IMR-90 (cell line): ENCODE measurements at regions of chr9 and their contacts with region 1.

Region 1: DNA sequence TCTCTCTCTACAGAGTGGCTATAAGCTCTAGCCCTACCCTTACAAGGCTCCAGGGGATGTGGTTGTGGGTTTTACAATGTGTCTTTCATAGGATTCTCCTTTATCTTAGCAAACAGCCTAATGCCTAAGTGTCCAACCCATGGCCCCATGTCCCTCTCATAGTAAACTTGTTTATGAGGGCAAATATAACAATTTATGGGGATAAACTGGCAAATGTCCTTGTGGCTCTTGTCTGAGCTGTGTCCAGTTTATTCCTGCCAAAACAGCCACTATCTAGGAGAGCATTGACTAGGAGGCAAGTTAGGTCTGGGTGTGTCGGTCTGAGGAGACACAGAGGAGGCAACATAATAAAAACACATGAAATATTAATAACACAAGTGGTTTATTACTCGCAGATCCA is 335.1 kb downstream of the IZUMO3 start:
- DNase-seq: no peak
- ATAC-seq: no peak
- H3K4me3 ChIP-seq: no peak overlapping the region
- H3K27ac ChIP-seq: no peak overlapping the region
- H3K4me1 ChIP-seq: no peaks in the 10 kb centered on the region
- H3K27me3 ChIP-seq: no peaks in the 10 kb centered on the region
- CTCF ChIP-seq: no peak
- POLR2A ChIP-seq: no peak
- RAD21 ChIP-seq: no peak

Region 2: DNA sequence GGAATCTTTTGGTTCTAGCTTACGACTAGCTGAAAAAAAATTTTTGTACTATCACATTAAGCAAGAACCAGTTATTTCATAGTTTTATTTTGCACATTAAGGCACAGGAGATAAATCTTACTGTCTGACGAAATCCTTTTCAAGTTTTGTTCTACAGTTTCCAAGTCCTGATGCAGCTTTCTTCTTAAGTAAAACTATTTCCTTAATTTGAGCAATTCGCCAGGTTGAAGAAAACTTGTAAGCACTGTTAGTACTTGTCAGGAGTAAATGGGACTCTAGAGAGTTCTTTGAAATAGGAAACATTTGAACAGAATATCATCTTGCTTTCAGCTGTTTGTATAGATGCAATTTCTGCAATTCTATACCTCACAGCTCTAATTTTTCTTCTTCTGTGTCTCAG is 65.8 kb before region 1 on chr9:
- CTCF ChIA-PET with region 1: no interaction called
- POLR2A ChIA-PET with region 1: no interaction called
- dilution Hi-C with region 1: no loop called
- in situ Hi-C with region 1: no loop called
- intact Hi-C with region 1: loop called (anchors 10 kb)
- DNase-seq: no peak
- ATAC-seq: no peak
- H3K4me3 ChIP-seq: no peak overlapping the region
- H3K27ac ChIP-seq: no peak overlapping the region
- H3K4me1 ChIP-seq: no peaks in the 10 kb centered on the region
- H3K27me3 ChIP-seq: no peaks in the 10 kb centered on the region
- CTCF ChIP-seq: no peak
- POLR2A ChIP-seq: no peak
- RAD21 ChIP-seq: no peak

Region 3: GRCh38 chr9:24436761-24437160 is 226.1 kb after region 1 on chr9:
- CTCF ChIA-PET with region 1: no interaction called
- POLR2A ChIA-PET with region 1: no interaction called
- dilution Hi-C with region 1: no loop called
- in situ Hi-C with region 1: no loop called
- intact Hi-C with region 1: no loop called
- DNase-seq: no peak
- ATAC-seq: no peak
- H3K4me3 ChIP-seq: no peak overlapping the region
- H3K27ac ChIP-seq: no peak overlapping the region
- H3K4me1 ChIP-seq: no peaks in the 10 kb centered on the region
- H3K27me3 ChIP-seq: no peaks in the 10 kb centered on the region
- CTCF ChIP-seq: no peak
- POLR2A ChIP-seq: no peak
- RAD21 ChIP-seq: no peak